Naive thymus-derived CD4-positive, alpha-beta T cell (primary cell): ENCODE measurements at regions of chr11 and their contacts with region 1.

Region 1: DNA sequence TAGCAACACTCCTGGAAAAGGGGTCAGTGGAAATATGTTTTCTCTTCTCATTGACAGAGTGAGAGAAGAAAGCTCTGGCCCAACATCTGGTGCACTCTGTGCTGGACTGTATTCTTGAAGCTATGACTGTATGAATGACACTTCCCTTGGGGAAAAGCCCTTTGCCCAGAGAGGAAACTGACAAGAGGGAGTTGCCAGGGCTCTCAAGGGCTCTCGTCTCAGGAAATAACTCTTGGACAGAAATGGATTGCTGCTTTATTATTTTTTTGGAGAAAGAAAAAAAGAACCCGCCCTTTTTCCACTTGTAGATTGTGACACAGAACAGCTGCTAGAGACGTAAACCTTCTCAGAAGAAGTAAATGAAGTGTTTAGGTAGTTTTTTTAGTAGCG is 11.4 kb downstream of the ETS1 start:
- DNase-seq: no peak
- ATAC-seq: peak; percentile 66
- H3K4me3 ChIP-seq: no peak overlapping the region
- H3K4me3 Mint-ChIP-seq: peak overlapping the region in 1 of 10 donors; percentile 34
- H3K27ac ChIP-seq: no peak overlapping the region
- H3K27ac Mint-ChIP-seq: no peak overlapping the region
- H3K4me1 ChIP-seq: peaks cover 0 to 23% of the 10 kb centered on the region in 2 donors
- H3K4me1 Mint-ChIP-seq: peaks cover 24 to 56% (median 41%) of the 10 kb centered on the region in 7 donors
- H3K27me3 ChIP-seq: no peaks in the 10 kb centered on the region
- H3K27me3 Mint-ChIP-seq: no peaks in the 10 kb centered on the region

Region 2: DNA sequence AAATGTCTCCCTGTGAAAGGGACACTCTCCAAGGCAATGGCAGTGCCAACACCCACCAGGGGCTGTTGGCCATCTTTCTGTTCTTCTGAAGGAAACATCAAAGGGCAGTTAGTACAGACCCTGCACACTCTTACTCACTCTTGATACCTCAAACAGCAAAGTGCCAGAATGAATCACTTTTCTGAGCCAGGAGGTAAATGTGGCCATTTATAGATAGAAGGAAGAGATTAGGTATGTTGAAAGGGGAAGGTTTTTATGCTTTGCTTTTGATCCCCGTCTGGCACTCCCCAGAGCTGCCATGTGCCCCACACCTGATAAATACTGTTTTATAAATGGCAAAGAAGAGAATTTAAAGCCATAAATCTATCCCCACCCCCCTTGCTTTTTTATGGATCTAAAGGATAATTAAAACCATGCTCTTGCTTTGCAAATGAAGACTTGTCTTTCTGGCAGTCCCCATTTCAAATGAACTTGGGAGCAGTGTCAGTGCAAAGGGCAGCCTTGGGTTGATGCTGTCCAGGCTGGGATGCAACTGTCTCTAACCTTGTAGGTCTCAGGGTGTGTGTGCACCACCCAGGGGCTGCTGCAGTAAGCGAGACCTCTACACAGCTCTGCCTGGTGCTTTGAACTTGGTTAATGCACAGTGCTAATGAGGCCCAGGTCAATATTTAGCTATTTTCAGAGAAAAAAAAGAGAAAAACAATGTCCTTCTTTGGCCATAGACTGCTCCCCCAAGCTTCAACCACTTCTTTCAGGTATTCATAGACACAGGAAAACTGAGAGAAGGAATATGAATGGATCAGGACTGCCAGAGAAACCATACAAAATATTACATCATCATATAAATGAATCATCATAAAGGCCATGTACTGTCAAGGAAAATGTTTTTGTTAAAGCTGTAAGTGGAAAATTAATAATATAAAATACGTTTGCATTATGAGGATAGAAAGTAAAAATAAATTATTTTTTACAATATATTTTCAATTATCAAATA is 196.1 kb before region 1 on chr11:
- CTCF ChIA-PET with region 1: no interaction called
- POLR2A ChIA-PET with region 1: no interaction called
- intact Hi-C with region 1: no loop called
- DNase-seq: peak in 7 of 9 donors; percentile 2 to 32 (median 25)
- ATAC-seq: peak; percentile 80
- H3K4me3 ChIP-seq: no peak overlapping the region
- H3K4me3 Mint-ChIP-seq: peak overlapping the region in 6 of 10 donors; percentile 10 to 39 (median 14)
- H3K27ac ChIP-seq: no peak overlapping the region
- H3K27ac Mint-ChIP-seq: peak overlapping the region in 7 of 9 donors; percentile 10 to 79 (median 23)
- H3K4me1 ChIP-seq: peaks cover 0 to 18% of the 10 kb centered on the region in 2 donors
- H3K4me1 Mint-ChIP-seq: peaks cover 4 to 62% (median 45%) of the 10 kb centered on the region in 7 donors
- H3K27me3 ChIP-seq: no peaks in the 10 kb centered on the region
- H3K27me3 Mint-ChIP-seq: no peaks in the 10 kb centered on the region

Region 3: GRCh38 chr11:128610721-128611617 is 35.0 kb after region 1 on chr11:
- CTCF ChIA-PET with region 1: interaction called, 3 read pairs
- POLR2A ChIA-PET with region 1: interaction called, 3 read pairs
- intact Hi-C with region 1: loop called in 1 of 2 experiments (anchors 2 kb)
- DNase-seq: peak; percentile 34 to 76 (median 62)
- ATAC-seq: peak; percentile 91
- H3K4me3 ChIP-seq: peak overlapping the region; percentile 11
- H3K4me3 Mint-ChIP-seq: peak overlapping the region; percentile 57 to 85 (median 76)
- H3K27ac ChIP-seq: peak overlapping the region; percentile 76
- H3K27ac Mint-ChIP-seq: peak overlapping the region; percentile 87 to 99 (median 95)
- H3K4me1 ChIP-seq: peaks cover 21 to 58% of the 10 kb centered on the region in 2 donors
- H3K4me1 Mint-ChIP-seq: peaks cover 31 to 88% (median 76%) of the 10 kb centered on the region in 7 donors
- H3K27me3 ChIP-seq: no peaks in the 10 kb centered on the region
- H3K27me3 Mint-ChIP-seq: no peaks in the 10 kb centered on the region